CD4-positive, alpha-beta memory T cell (primary cell): ENCODE measurements at regions of chr1 and their contacts with region 1.

Region 1: DNA sequence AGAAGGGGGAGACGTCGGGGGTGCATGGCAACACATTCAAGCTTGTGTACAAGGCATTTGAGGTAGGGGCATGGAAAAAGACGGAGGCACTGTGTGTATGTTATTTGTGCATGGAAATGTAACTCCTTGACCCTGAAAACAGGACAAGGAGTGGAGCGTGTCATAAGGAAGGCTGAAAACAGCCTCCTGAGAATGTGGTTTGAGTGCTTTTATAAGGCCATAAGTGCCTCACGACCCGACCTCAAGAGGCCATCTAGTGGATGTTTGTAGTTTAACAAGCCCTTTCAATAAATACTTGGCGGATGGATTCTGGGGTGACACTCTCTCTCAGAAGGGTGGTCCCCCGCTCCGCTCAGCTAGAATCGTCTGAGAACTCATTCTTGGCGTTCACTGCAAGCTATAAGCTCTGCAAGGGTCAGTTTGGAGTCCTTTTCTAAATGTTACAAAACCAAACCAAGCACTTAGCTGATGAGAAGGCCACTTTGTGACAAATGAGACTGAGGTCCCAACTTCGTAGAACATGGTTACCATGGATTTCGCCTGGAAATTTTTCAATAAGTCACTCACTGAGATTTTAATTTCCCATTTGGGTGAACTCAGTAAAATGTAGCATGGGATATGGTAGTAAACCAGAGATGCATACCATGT is 38.8 kb upstream of the CLCA4 start:
- DNase-seq: peak in 4 of 5 donors; percentile 14 to 23 (median 17)
- H3K4me3 ChIP-seq: no peak overlapping the region
- H3K4me3 Mint-ChIP-seq: no peak overlapping the region
- H3K27ac ChIP-seq: no peak overlapping the region
- H3K27ac Mint-ChIP-seq: no peak overlapping the region
- H3K4me1 ChIP-seq: no peaks in the 10 kb centered on the region
- H3K4me1 Mint-ChIP-seq: peaks cover 0 to 9% (median 1%) of the 10 kb centered on the region in 4 donors
- H3K27me3 ChIP-seq: no peaks in the 10 kb centered on the region
- H3K27me3 Mint-ChIP-seq: peaks cover 8 to 11% of the 10 kb centered on the region in 2 donors

Region 2: GRCh38 chr1:86389307-86389706 is 118.8 kb before region 1 on chr1:
- CTCF ChIA-PET with region 1: interaction called, 117 read pairs
- POLR2A ChIA-PET with region 1: no interaction called
- intact Hi-C with region 1: no loop called
- DNase-seq: peak in 4 of 5 donors; percentile 51 to 66 (median 55)
- H3K4me3 ChIP-seq: peak overlapping the region; percentile 9 to 12
- H3K4me3 Mint-ChIP-seq: peak overlapping the region; percentile 59 to 88 (median 83)
- H3K27ac ChIP-seq: peak overlapping the region; percentile 39
- H3K27ac Mint-ChIP-seq: peak overlapping the region; percentile 82 to 98 (median 93)
- H3K4me1 ChIP-seq: peaks cover 67% of the 10 kb centered on the region
- H3K4me1 Mint-ChIP-seq: peaks cover 45 to 68% (median 50%) of the 10 kb centered on the region in 4 donors
- H3K27me3 ChIP-seq: no peaks in the 10 kb centered on the region
- H3K27me3 Mint-ChIP-seq: no peaks in the 10 kb centered on the region